Body of pancreas (tissue), 4 donors: ENCODE measurements at regions of chr1 and their contacts with region 1.

Region 1: GRCh38 chr1:111507411-111508201 is 4.2 kb upstream of the ADORA3 start:
- DNase-seq: peak; percentile 47 to 83 (median 58)
- ATAC-seq: peak; percentile 70
- H3K4me3 ChIP-seq: no peak overlapping the region
- H3K27ac ChIP-seq: peak overlapping the region; percentile 80 to 89 (median 84)
- H3K4me1 ChIP-seq: peaks cover 22% of the 10 kb centered on the region
- H3K27me3 ChIP-seq: no peaks in the 10 kb centered on the region
- CTCF ChIP-seq: peak in 1 of 7 experiments; percentile 3
- POLR2A ChIP-seq: peak in 1 of 3 donors; percentile 32

Region 2: GRCh38 chr1:111769517-111770146 is 262.0 kb after region 1 on chr1:
- intact Hi-C with region 1: loop called (anchors 10 kb)
- DNase-seq: peak; percentile 39 to 58 (median 48)
- ATAC-seq: peak; percentile 73
- H3K4me3 ChIP-seq: no peak overlapping the region
- H3K27ac ChIP-seq: no peak overlapping the region
- H3K4me1 ChIP-seq: peaks cover 8% of the 10 kb centered on the region
- H3K27me3 ChIP-seq: no peaks in the 10 kb centered on the region
- CTCF ChIP-seq: peak; percentile 49 to 92 (median 87)
- POLR2A ChIP-seq: no peak